ENCODE measurements at regions of chr9 and their contacts with region 1.

Region 1: GRCh38 chr9:114738581-114739316 is 56.8 kb upstream of the TEX48 start:
- DNase-seq: peak; percentile 80
- H3K4me3 Mint-ChIP-seq: no peak overlapping the region
- H3K27ac Mint-ChIP-seq: peak overlapping the region; percentile 64
- H3K4me1 Mint-ChIP-seq: peaks cover 59% of the 10 kb centered on the region
- H3K27me3 Mint-ChIP-seq: peaks cover 11% of the 10 kb centered on the region

Region 2: DNA sequence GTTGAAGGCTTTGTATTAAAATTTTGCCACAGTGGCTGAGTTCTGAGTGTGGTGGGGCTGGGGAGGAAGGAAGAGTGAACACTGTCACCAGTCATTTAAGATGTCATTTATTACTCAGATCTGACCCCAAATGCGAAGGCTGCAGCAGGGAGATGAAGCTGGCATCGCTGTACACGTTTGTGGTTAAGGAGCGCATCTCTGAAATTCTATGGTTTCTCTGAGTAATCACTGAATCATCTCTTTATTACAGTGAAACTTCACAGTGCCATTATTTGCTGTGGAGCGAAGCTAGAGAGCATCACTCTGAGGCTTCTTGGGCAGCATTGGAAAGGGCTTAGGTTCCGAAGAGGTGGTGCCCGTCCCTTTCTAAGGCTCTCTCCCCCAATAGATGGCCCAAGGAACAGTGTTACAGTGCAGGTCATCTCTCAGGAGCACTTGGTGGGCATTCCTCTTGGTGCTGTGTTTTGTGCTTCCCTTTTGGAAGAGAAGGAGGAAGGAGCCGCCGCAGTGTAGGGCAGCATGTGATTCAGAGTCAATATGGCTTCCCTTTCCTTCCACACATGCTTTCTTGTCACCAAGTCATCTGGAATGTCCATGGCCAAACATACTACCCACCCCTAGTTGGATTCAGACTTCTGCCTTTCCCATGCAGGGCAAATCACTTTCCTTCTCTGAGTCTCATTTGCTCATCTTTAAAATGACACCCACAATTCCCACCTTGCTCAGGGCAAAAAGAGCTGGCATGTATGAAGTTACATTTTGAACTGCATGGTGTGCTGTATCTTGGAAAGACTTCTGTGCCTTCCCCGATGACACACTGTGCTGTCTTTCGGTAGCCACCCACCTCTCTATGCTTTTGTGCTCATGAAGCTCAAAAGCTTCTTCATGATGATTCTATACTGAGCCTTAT is 47.4 kb before region 1 on chr9:
- CTCF ChIA-PET with region 1: interaction called, 28 read pairs
- POLR2A ChIA-PET with region 1: interaction called, 61 read pairs
- DNase-seq: peak; percentile 87
- H3K4me3 Mint-ChIP-seq: peak overlapping the region; percentile 26
- H3K27ac Mint-ChIP-seq: peak overlapping the region; percentile 93
- H3K4me1 Mint-ChIP-seq: peaks cover 95% of the 10 kb centered on the region
- H3K27me3 Mint-ChIP-seq: peaks cover 33% of the 10 kb centered on the region

Region 3: DNA sequence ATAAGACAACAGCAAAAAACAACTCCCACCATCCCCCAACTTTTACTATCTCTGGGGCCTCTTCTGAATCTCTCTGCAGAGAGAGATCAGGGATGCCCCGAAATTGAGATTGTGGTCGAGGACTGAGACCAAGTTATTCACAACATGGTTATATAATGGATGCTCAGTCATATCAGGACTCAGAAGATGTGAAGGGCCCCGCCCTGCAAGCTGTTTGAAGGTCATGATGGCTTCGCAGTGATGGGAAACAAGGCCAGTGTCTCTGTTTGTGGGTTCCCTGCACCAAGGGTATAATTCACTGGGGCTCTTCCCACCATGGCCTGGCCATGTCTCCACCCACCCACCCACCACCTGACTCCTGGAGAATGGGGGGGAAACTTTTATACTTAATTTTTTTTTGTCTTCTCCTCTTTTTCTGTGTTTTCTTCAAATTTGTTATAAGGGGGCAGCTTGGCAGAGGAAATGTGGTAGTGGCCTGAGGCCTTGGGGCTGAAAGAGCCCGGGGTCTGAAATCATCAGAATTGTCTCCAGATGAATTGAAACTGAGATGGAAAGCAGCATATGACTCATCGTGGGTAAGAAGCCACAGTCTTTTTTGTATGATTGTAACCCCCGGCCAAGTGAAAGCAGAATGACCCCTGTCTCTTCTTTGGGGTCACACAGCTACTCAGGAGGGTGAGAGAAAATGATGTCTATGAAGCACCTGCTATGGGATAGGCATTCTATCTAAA is 41.8 kb before region 1 on chr9:
- CTCF ChIA-PET with region 1: interaction called, 10 read pairs
- POLR2A ChIA-PET with region 1: interaction called, 61 read pairs
- DNase-seq: peak; percentile 85
- H3K4me3 Mint-ChIP-seq: peak overlapping the region; percentile 39
- H3K27ac Mint-ChIP-seq: peak overlapping the region; percentile 97
- H3K4me1 Mint-ChIP-seq: peaks cover 79% of the 10 kb centered on the region
- H3K27me3 Mint-ChIP-seq: peaks cover 34% of the 10 kb centered on the region

Region 4: DNA sequence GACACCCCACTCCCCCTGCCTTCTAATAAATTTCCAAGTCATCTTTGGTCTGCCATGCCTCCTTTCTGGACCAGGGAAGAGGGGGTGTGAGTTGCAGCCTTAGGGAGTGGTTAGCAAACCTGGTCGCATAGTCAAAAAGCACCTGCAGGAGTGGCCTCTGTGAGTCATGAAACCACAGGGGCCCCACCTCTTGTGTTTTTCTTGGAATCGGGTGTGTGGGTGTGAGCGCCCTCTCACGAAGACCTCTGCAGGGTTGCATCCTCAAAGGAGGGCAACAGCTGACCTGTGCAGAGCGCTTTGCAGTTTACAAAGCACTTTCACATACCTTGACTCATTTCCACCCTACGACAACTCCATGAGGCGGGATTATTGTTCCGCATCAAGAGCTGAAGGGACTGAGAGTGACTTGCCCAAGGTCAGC is 19.9 kb before region 1 on chr9:
- CTCF ChIA-PET with region 1: interaction called, 12 read pairs
- POLR2A ChIA-PET with region 1: interaction called, 92 read pairs
- DNase-seq: peak; percentile 98
- H3K4me3 Mint-ChIP-seq: peak overlapping the region; percentile 3
- H3K27ac Mint-ChIP-seq: peak overlapping the region; percentile 93
- H3K4me1 Mint-ChIP-seq: peaks cover 68% of the 10 kb centered on the region
- H3K27me3 Mint-ChIP-seq: peaks cover 20% of the 10 kb centered on the region

Region 5: DNA sequence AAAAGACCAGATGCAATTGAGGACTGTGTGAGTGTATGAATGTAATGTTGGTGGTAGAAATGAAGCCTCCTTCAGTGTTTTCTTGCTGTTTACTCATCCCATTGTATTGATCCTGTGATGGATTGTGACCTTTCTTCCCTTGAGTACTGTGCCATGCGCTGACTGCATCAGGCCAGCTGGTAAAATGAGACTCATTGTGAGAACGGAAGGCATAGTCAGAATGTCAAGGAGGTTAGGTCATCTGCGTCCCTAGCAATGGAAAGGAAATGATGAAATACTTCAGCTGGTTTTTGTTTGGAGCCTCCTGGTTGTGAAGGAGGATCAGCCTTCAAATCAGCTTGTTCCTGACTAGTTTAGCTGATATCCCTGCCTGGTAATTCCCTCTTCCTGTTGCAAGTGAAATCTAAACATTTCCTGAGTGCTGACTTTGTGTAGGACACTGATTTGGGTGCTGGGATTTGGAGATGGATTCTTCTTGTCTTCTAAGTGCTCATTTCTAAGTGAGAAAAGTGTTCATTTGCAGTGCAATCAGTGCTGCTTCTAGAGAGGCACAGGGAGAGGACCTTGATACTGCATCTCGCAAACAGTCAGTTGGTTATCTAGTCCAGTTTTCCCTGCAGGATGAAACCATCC is 156.2 kb after region 1 on chr9:
- CTCF ChIA-PET with region 1: interaction called, 12 read pairs
- POLR2A ChIA-PET with region 1: interaction called, 9 read pairs
- DNase-seq: peak; percentile 66
- H3K4me3 Mint-ChIP-seq: no peak overlapping the region
- H3K27ac Mint-ChIP-seq: peak overlapping the region; percentile 74
- H3K4me1 Mint-ChIP-seq: peaks cover 43% of the 10 kb centered on the region
- H3K27me3 Mint-ChIP-seq: no peaks in the 10 kb centered on the region

Region 6: DNA sequence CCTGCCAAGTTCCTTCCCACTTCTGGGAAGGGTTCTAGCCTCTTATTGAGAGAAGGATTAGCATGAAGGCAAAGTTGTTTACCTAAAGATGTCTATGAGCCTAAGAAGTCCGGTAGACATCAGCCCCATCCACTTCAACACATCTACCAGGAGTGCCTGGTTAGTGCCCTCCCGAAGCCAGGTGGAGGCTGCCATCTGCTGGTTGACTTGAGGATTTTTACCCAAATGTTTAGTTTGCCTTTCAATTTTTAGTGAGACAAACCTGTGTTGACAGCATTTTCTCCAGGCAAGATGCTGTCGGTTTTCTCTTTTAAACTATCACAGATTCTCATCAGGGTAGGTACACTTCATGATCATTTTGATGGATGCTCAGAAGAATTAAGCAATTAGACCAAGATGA is 275.2 kb after region 1 on chr9:
- CTCF ChIA-PET with region 1: interaction called, 96 read pairs
- POLR2A ChIA-PET with region 1: interaction called, 4 read pairs
- DNase-seq: peak; percentile 83
- H3K4me3 Mint-ChIP-seq: no peak overlapping the region
- H3K27ac Mint-ChIP-seq: peak overlapping the region; percentile 24
- H3K4me1 Mint-ChIP-seq: peaks cover 30% of the 10 kb centered on the region
- H3K27me3 Mint-ChIP-seq: peaks cover 17% of the 10 kb centered on the region